Activated CD4-positive, alpha-beta T cell treated with anti-CD3 and anti-CD28 coated beads, Interleukin-2, amount 10 ng/mL, durations not matched to agents 7 days and 5 days (primary cell): ENCODE measurements at regions of chr21 and their contacts with region 1.

Region 1: GRCh38 chr21:25507522-25507921 is 99.8 kb downstream of the MRPL39 start:
- DNase-seq: no peak
- H3K4me3 Mint-ChIP-seq: no peak overlapping the region
- H3K27ac Mint-ChIP-seq: no peak overlapping the region
- H3K4me1 Mint-ChIP-seq: peaks cover 33% of the 10 kb centered on the region
- H3K27me3 Mint-ChIP-seq: no peaks in the 10 kb centered on the region

Region 2: DNA sequence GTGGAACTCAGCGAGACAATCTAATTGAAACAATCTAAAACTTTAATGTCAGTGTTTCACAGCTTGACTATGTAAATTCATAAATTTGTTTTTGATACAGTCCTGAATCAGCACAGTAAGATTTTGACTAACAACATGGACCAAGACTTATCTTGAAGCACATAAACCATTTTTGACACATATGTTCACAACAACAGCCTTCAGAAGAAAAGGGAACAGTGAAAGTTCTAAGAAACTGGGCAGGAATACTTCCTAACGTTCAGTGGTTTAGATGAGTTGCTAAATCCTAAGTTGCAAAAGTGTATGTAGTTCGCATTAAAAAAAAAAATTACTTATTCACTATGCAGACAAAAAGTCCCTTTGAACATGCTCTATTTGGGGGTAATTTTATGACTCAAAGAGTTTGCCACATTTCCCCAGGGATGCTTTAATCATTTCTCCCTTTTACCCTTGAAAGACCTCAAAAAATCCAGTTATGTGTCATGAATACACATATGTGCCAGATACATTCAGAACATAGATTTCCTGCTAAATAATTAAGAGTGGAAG is 20.4 kb before region 1 on chr21:
- CTCF ChIA-PET with region 1: interaction called, 10 read pairs
- POLR2A ChIA-PET with region 1: no interaction called
- DNase-seq: no peak
- H3K4me3 Mint-ChIP-seq: no peak overlapping the region
- H3K27ac Mint-ChIP-seq: peak overlapping the region; percentile 63
- H3K4me1 Mint-ChIP-seq: peaks cover 41% of the 10 kb centered on the region
- H3K27me3 Mint-ChIP-seq: no peaks in the 10 kb centered on the region